CD4-positive, alpha-beta T cell (primary cell): ENCODE measurements at regions of chr11 and their contacts with region 1.

Region 1: GRCh38 chr11:11798586-11799438 is 43.0 kb upstream of the USP47 start:
- DNase-seq: peak; percentile 58 to 92 (median 76)
- ATAC-seq: peak; percentile 91
- H3K4me3 ChIP-seq: no peak overlapping the region
- H3K4me3 Mint-ChIP-seq: no peak overlapping the region
- H3K27ac ChIP-seq: no peak overlapping the region
- H3K27ac Mint-ChIP-seq: no peak overlapping the region
- H3K4me1 ChIP-seq: peaks cover 4% of the 10 kb centered on the region
- H3K4me1 Mint-ChIP-seq: no peaks in the 10 kb centered on the region
- H3K27me3 ChIP-seq: peaks cover 4 to 5% of the 10 kb centered on the region in 2 experiments
- H3K27me3 Mint-ChIP-seq: peaks cover 32% of the 10 kb centered on the region
- CTCF ChIP-seq: peak; percentile 94

Region 2: GRCh38 chr11:11770296-11770695 is 28.5 kb before region 1 on chr11:
- CTCF ChIA-PET with region 1: no interaction called
- POLR2A ChIA-PET with region 1: no interaction called
- intact Hi-C with region 1: no loop called
- DNase-seq: no peak
- ATAC-seq: no peak
- H3K4me3 ChIP-seq: no peak overlapping the region
- H3K4me3 Mint-ChIP-seq: no peak overlapping the region
- H3K27ac ChIP-seq: no peak overlapping the region
- H3K27ac Mint-ChIP-seq: no peak overlapping the region
- H3K4me1 ChIP-seq: no peaks in the 10 kb centered on the region
- H3K4me1 Mint-ChIP-seq: no peaks in the 10 kb centered on the region
- H3K27me3 ChIP-seq: peaks cover 3 to 4% of the 10 kb centered on the region in 2 experiments
- H3K27me3 Mint-ChIP-seq: peaks cover 29% of the 10 kb centered on the region
- CTCF ChIP-seq: no peak

Region 3: GRCh38 chr11:11860103-11860979 is 61.5 kb after region 1 on chr11:
- CTCF ChIA-PET with region 1: no interaction called
- POLR2A ChIA-PET with region 1: no interaction called
- intact Hi-C with region 1: no loop called
- DNase-seq: no peak
- ATAC-seq: no peak
- H3K4me3 ChIP-seq: no peak overlapping the region
- H3K4me3 Mint-ChIP-seq: peak overlapping the region; percentile 12
- H3K27ac ChIP-seq: no peak overlapping the region
- H3K27ac Mint-ChIP-seq: no peak overlapping the region
- H3K4me1 ChIP-seq: peaks cover 21% of the 10 kb centered on the region
- H3K4me1 Mint-ChIP-seq: peaks cover 74% of the 10 kb centered on the region
- H3K27me3 ChIP-seq: no peaks in the 10 kb centered on the region
- H3K27me3 Mint-ChIP-seq: no peaks in the 10 kb centered on the region
- CTCF ChIP-seq: no peak

Region 4: DNA sequence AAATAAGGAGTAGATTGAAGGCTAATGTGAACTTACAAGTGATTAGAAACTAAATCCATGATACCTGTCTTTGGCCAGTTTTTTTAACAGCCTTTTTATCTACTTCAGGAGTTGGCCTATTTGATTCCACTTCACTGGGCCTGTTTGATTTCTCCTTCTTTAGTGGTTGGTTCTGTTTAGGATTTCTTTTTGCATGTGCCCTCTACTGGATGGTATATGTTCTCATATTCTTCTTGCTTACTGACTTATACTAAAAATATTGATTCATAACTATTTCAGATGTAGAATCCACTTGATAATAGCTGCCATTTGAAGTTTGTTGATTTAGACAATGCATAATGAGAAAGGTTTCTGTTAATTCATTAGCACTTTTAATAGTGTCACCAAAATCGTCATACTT is 96.9 kb after region 1 on chr11:
- CTCF ChIA-PET with region 1: no interaction called
- POLR2A ChIA-PET with region 1: no interaction called
- intact Hi-C with region 1: loop called (anchors 2 to 5 kb)
- DNase-seq: no peak
- ATAC-seq: no peak
- H3K4me3 ChIP-seq: no peak overlapping the region
- H3K4me3 Mint-ChIP-seq: no peak overlapping the region
- H3K27ac ChIP-seq: no peak overlapping the region
- H3K27ac Mint-ChIP-seq: no peak overlapping the region
- H3K4me1 ChIP-seq: no peaks in the 10 kb centered on the region
- H3K4me1 Mint-ChIP-seq: peaks cover 15% of the 10 kb centered on the region
- H3K27me3 ChIP-seq: no peaks in the 10 kb centered on the region
- H3K27me3 Mint-ChIP-seq: no peaks in the 10 kb centered on the region
- CTCF ChIP-seq: no peak

Region 5: GRCh38 chr11:11966826-11967668 is 168.2 kb after region 1 on chr11:
- CTCF ChIA-PET with region 1: no interaction called
- POLR2A ChIA-PET with region 1: no interaction called
- intact Hi-C with region 1: loop called in 1 of 2 experiments (anchors 5 kb)
- DNase-seq: peak; percentile 50 to 78 (median 60)
- ATAC-seq: peak; percentile 95
- H3K4me3 ChIP-seq: no peak overlapping the region
- H3K4me3 Mint-ChIP-seq: no peak overlapping the region
- H3K27ac ChIP-seq: no peak overlapping the region
- H3K27ac Mint-ChIP-seq: no peak overlapping the region
- H3K4me1 ChIP-seq: peaks cover 10% of the 10 kb centered on the region
- H3K4me1 Mint-ChIP-seq: peaks cover 11% of the 10 kb centered on the region
- H3K27me3 ChIP-seq: no peaks in the 10 kb centered on the region
- H3K27me3 Mint-ChIP-seq: no peaks in the 10 kb centered on the region
- CTCF ChIP-seq: peak; percentile 73